Activated CD8-positive, alpha-beta memory T cell treated with anti-CD3 and anti-CD28 coated beads, Interleukin-2, amount 10 ng/mL, durations not matched to agents 7 days and 5 days (primary cell): ENCODE measurements at regions of chr1 and their contacts with region 1.

Region 1: DNA sequence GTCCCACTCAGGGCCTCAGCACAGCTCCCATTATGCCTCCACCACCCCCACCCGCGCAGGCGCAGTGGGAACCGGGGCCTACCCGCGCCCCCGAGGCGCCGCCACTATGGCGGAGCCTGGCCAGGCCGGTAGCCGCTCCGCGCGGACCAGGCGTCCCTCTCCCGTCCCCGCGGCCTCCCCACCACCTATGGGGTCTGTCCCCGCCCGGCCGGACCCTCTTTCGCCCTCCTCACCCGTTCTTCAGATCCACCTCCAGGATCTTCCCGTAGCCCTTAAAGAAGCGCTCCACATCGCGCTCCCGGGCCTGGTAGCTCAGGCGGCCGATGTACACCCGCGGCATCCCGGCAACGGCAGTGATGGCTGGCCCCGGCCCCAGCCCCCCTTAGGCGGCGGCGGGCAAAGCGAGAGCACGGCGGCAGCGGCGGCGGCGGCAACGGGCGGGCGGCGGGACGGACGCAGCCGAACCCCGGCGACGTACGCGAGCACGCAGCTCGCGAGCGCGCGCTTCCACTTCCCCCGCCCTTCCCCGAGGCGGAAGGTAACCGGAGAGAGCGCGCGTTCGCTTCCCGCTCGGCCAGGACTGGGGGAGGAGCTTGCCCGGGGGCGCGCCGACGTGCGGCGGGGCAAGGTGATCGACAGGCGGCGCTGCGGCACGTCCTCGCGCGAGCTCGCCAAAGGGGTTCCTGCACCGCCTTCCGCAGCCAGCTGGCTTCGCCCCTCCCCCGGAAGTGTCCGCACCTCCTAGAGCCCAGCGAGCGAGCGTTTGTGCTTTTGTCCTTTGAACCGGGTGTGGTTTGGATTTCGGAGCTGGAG is at the start of gene SRSF4:
- DNase-seq: peak; percentile 99
- ATAC-seq: peak; percentile 90
- H3K4me3 Mint-ChIP-seq: peak within 1 kb of the TSS; percentile 95
- H3K27ac Mint-ChIP-seq: peak within 1 kb of the TSS; percentile 97
- H3K4me1 Mint-ChIP-seq: peaks cover 44% of the 10 kb centered on the region
- H3K27me3 Mint-ChIP-seq: no peaks in the 10 kb centered on the region
- total RNA-seq, gene SRSF4: 145 to 147 TPM

Region 2: GRCh38 chr1:29124366-29125236 is 57.0 kb before region 1 on chr1:
- CTCF ChIA-PET with region 1: interaction called, 10 read pairs
- DNase-seq: peak; percentile 77
- ATAC-seq: peak; percentile 71
- H3K4me3 Mint-ChIP-seq: peak overlapping the region; percentile 63
- H3K27ac Mint-ChIP-seq: no peak overlapping the region
- H3K4me1 Mint-ChIP-seq: peaks cover 4% of the 10 kb centered on the region
- H3K27me3 Mint-ChIP-seq: peaks cover 36% of the 10 kb centered on the region

Region 3: DNA sequence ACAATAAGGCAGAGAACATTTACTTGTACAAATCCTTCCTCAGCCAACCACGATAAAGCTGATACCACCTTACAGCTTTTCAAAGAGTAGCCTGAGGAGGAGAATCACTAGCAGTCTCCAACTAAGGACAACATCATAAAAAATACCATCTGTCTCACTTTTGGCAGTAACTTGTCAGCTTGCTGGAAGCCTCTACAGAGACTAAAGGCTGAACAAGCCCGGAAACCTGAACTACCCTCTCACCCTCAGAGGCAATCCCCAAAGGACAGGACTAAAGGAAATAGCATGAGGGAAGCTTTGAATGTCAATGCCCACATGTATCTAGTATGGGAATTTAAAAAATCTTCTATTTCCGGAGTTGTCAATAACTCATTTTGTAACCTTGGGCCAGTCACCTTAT is 10.5 kb before region 1 on chr1:
- CTCF ChIA-PET with region 1: interaction called, 12 read pairs
- DNase-seq: no peak
- ATAC-seq: peak; percentile 26
- H3K4me3 Mint-ChIP-seq: peak overlapping the region; percentile 0
- H3K27ac Mint-ChIP-seq: peak overlapping the region; percentile 70
- H3K4me1 Mint-ChIP-seq: peaks cover 62% of the 10 kb centered on the region
- H3K27me3 Mint-ChIP-seq: no peaks in the 10 kb centered on the region

Region 4: GRCh38 chr1:29197585-29197924 is 15.9 kb after region 1 on chr1:
- CTCF ChIA-PET with region 1: interaction called, 60 read pairs
- DNase-seq: peak; percentile 62
- ATAC-seq: peak; percentile 85
- H3K4me3 Mint-ChIP-seq: no peak overlapping the region
- H3K27ac Mint-ChIP-seq: peak overlapping the region; percentile 15
- H3K4me1 Mint-ChIP-seq: peaks cover 17% of the 10 kb centered on the region
- H3K27me3 Mint-ChIP-seq: no peaks in the 10 kb centered on the region

Region 5: DNA sequence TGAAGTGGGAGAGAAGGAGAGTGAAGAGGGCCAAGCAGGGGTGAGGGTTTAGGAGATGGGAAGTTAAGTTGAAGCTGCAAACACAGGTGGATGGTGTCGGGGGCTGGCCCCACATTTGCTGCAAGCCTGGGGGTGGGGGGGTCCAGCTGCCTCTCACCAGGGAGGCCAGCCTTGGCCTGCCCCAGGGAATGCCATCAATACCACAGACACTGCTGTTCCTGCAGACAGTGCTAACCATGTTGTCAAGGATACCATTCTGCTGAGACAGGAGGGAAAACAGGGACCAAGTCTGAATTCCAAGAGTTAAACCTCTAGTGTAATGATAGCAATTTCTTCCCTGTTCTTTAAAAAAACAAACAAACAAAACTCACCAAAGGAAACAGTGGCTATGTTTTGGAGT is 41.1 kb after region 1 on chr1:
- CTCF ChIA-PET with region 1: no interaction called
- DNase-seq: no peak
- ATAC-seq: no peak
- H3K4me3 Mint-ChIP-seq: no peak overlapping the region
- H3K27ac Mint-ChIP-seq: no peak overlapping the region
- H3K4me1 Mint-ChIP-seq: no peaks in the 10 kb centered on the region
- H3K27me3 Mint-ChIP-seq: no peaks in the 10 kb centered on the region